HepG2 (cell line): ENCODE measurements at regions of chr18 and their contacts with region 1.

Region 1: DNA sequence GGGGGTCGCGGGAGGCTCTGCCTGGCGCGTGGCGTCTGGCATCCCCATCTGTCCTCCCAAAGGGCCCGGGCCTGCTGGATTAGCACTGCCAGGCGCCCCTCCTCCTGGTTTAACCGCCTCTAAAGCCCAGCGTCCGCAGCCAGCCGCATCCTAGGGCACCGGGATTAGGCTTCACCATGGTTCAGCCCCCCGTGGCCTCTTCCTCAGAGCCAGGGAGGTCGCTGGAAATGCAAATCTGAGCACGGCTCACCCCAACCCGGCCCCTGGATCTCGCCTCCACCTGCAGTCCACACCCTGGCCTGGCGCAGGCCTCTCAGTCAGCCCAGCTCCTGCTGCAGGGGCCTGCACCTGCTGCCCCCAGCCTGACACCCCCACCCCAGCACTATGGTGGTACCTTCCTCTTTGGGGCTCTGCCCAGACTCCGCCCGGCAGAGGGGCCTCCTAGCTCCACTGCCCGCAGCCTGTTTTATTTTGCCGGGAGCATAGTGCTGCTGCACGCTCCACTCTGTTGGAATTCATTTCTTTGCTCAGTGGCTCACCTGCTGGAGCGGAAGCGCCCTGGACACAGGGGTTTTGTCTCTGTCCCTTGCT is 13.2 kb downstream of the PRELID3A start:
- DNase-seq: peak; percentile 66
- ATAC-seq: peak; percentile 79
- H3K4me3 ChIP-seq: peak overlapping the region; percentile 76 to 87 (median 86)
- H3K27ac ChIP-seq: peak overlapping the region; percentile 92
- H3K4me1 ChIP-seq: peaks cover 52% of the 10 kb centered on the region
- H3K27me3 ChIP-seq: no peaks in the 10 kb centered on the region
- CTCF ChIP-seq: no peak; the same call in 1 of the 2 replicates
- EP300 ChIP-seq: no peak
- POLR2A ChIP-seq: peak; percentile 56 to 65
- RAD21 ChIP-seq: no peak

Region 2: GRCh38 chr18:12397254-12397653 is 23.7 kb before region 1 on chr18:
- CTCF ChIA-PET with region 1: interaction called, 5 read pairs
- POLR2A ChIA-PET with region 1: interaction called, 10 read pairs
- in situ Hi-C with region 1: no loop called
- intact Hi-C with region 1: loop called (anchors 2 kb)
- DNase-seq: no peak
- ATAC-seq: peak; percentile 54
- H3K4me3 ChIP-seq: peak overlapping the region in 2 of 3 experiments; percentile 19 to 56; a peak in 2 of 6 replicates
- H3K27ac ChIP-seq: no peak overlapping the region
- H3K4me1 ChIP-seq: peaks cover 75% of the 10 kb centered on the region
- H3K27me3 ChIP-seq: peaks cover 0 to 20% of the 10 kb centered on the region in 2 experiments; a peak in 1 of 5 replicates
- CTCF ChIP-seq: no peak
- EP300 ChIP-seq: no peak
- POLR2A ChIP-seq: no peak
- RAD21 ChIP-seq: no peak